ENCODE measurements at regions of chr21 and their contacts with region 1.

Region 1: DNA sequence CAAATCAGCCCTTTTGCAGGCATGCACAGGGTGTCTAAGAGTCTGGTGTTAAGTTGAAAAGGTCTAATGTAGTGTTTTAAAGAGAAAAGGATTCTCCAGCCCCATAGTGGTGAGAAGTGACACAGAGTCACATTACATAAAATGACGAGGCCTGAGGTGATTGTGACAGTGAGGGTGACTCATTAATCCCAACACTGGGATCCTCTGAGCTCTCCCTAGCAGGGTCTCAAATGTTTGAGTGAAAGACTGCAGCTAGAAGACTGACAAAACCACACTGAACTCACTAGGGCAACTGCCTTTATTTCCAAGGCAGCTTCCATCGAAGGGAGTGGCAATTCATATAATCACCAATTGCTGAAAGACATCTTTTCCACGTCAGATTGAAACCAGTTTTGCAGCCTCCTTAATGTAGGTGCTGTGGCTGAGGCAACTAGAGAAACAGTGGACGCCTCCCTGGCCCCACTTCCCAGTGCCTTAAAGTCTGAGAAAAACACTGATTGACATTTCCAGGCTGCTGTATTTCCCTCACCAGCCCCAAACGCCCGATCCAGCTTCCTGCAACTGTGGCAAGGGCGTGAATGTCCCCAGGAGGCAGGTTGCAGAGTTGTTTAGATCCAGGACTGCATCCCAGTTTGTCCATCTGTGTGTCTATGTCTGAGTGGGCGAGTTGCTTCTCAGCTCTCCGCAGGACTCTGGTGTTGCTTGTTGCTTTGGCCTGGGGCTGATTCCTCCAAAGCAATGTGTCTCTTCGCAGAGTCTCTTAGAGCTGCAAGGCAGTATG is 81.4 kb downstream of the RUNX1 start:
- DNase-seq: peak; percentile 75
- ATAC-seq: peak; percentile 74
- H3K4me3 Mint-ChIP-seq: peak overlapping the region; percentile 29
- H3K27ac Mint-ChIP-seq: peak overlapping the region; percentile 89
- H3K4me1 Mint-ChIP-seq: peaks cover 87% of the 10 kb centered on the region
- H3K27me3 Mint-ChIP-seq: peaks cover 3% of the 10 kb centered on the region
- CTCF ChIP-seq: no peak

Region 2: GRCh38 chr21:34679051-34679450 is 288.6 kb before region 1 on chr21:
- CTCF ChIA-PET with region 1: no interaction called
- POLR2A ChIA-PET with region 1: no interaction called
- intact Hi-C with region 1: no loop called
- DNase-seq: no peak
- ATAC-seq: no peak
- H3K4me3 Mint-ChIP-seq: no peak overlapping the region
- H3K27ac Mint-ChIP-seq: no peak overlapping the region
- H3K4me1 Mint-ChIP-seq: no peaks in the 10 kb centered on the region
- H3K27me3 Mint-ChIP-seq: peaks cover 5% of the 10 kb centered on the region
- CTCF ChIP-seq: no peak

Region 3: DNA sequence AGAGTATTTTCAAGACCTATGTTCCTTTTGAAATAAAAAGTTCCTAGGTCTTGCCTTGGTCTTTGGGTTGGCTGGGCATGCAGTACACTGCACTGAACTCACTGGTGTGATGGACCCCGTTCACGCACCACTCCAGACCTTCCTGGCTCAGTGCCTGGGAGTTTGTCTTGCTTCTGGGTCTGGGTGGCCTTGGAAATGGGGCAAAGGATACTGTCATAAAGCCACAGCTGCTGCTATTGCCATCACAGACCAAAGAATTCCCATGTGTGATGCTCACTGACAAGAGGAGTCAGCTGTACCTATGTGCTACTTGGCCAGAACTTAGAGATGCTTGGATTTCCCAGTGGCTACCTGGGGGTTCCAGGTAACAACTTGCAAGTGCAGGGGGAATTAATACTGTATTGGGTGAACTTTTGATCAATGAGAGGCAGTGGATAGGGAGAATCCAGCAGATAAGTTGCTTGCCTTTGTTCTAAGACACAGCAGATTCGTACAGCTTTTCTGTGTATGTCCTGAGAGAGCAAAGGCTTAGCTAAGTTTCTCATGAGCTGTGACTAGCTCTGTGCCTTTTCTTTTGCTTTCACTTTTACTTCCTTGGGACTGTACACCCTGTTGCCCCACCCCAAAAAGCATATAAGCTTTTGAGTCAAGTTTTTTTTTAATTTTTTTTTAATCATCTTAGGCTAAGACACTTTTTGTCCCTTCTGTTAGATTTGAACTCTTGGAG is 33.9 kb before region 1 on chr21:
- CTCF ChIA-PET with region 1: interaction called, 7 read pairs
- POLR2A ChIA-PET with region 1: interaction called, 4 read pairs
- intact Hi-C with region 1: loop called (anchors 2 kb)
- DNase-seq: peak; percentile 49
- ATAC-seq: peak; percentile 84
- H3K4me3 Mint-ChIP-seq: peak overlapping the region; percentile 75
- H3K27ac Mint-ChIP-seq: peak overlapping the region; percentile 98
- H3K4me1 Mint-ChIP-seq: peaks cover 82% of the 10 kb centered on the region
- H3K27me3 Mint-ChIP-seq: no peaks in the 10 kb centered on the region
- CTCF ChIP-seq: no peak

Region 4: GRCh38 chr21:34952701-34953100 is 15.0 kb before region 1 on chr21:
- CTCF ChIA-PET with region 1: interaction called, 21 read pairs
- POLR2A ChIA-PET with region 1: interaction called, 32 read pairs
- intact Hi-C with region 1: no loop called
- DNase-seq: no peak
- ATAC-seq: peak; percentile 35
- H3K4me3 Mint-ChIP-seq: no peak overlapping the region
- H3K27ac Mint-ChIP-seq: no peak overlapping the region
- H3K4me1 Mint-ChIP-seq: peaks cover 67% of the 10 kb centered on the region
- H3K27me3 Mint-ChIP-seq: no peaks in the 10 kb centered on the region
- CTCF ChIP-seq: no peak

Measured in activated CD8-positive, alpha-beta T cell treated with anti-CD3 and anti-CD28 coated beads for 36 hours (primary cell).